MCF 10A (cell line): ENCODE measurements at regions of chr5 and their contacts with region 1.

Region 1: DNA sequence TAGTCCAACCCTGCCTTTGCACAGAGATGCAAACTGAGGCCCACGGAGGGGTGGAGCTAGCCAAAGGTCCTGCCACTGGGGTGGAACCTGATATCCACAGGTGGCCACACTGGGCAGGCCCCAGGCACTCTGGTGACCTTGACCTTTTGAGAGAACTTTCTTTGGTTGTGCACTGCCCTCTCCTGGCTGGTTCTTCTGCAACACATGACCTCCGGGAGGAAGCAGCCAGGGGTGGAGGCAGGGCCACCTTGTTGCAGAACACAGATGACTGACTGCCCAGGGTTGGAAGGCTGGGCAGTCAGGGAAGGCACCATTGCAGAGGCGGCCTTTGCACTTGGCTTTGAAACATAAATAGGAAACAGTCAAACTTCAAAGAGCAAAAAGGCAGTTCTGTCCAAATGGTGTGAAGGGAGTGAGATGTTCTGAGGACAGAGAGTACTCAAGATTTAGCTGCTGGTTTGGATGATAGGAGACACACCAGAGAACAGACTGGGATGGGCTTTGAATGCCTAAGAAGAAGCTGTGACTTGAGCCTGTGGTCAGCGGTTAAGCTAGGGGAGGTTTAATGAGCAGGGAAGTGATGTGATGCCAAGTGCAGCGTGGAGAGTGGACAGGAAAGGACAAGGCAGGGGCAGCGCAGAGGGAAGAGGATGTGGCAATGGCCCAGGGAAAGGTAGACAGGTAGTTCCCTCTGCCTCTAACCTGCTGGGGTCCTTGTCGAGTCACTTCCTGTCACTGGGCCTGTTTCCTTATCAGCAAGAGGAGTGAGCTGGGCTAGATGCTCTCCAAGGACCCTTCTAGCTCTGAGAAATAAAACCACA is 6.8 kb upstream of the TCOF1 start:
- DNase-seq: peak; percentile 91
- H3K4me3 Mint-ChIP-seq: no peak overlapping the region
- H3K27ac Mint-ChIP-seq: no peak overlapping the region
- H3K4me1 Mint-ChIP-seq: peaks cover 6% of the 10 kb centered on the region
- H3K27me3 Mint-ChIP-seq: no peaks in the 10 kb centered on the region
- CTCF ChIP-seq: peak; percentile 94

Region 2: GRCh38 chr5:149298842-149299404 is 1051.8 kb before region 1 on chr5:
- CTCF ChIA-PET with region 1: no interaction called
- POLR2A ChIA-PET with region 1: no interaction called
- intact Hi-C with region 1: no loop called
- DNase-seq: no peak
- H3K4me3 Mint-ChIP-seq: no peak overlapping the region
- H3K27ac Mint-ChIP-seq: no peak overlapping the region
- H3K4me1 Mint-ChIP-seq: peaks cover 9% of the 10 kb centered on the region
- H3K27me3 Mint-ChIP-seq: no peaks in the 10 kb centered on the region
- CTCF ChIP-seq: no peak

Region 3: DNA sequence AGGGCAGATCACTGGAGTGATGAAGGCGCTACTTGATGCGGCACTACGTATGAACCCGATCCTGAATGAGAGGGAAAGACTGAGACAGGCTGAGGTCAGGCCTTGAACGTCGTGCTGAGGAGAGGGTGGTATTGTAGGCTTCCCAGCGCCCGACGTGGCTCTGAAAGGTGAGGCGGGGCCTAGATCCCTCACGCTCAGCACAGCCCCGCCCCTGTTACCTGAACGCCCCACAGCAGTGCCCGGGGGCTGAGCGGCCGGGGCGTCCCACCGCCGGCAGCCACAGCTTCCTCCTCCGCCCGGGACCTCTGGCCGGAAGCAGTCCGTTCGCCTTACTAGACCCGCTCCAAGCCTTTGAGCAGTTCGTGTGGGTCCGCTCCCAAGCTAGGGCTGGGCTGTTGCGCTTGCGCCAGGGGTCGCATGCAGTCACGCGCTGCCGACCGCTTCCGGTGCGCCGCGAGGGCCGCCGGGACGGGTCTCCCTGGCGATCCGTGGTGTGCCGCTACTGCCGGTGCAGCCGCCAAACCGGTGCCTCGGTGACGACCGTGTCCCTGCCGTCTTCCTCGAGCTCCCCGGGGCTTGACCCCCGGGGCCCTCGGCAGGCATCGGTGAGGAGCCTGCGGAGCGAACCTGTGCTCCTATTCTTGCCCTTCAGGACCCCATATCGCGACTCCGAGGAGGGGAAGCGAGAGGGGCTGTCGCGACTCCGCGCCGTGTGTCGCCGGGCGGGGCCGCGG is 350.3 kb before region 1 on chr5 and contains the starts of genes HMGXB3 and TIGD6:
- CTCF ChIA-PET with region 1: no interaction called
- POLR2A ChIA-PET with region 1: no interaction called
- intact Hi-C with region 1: loop called (anchors 2 kb)
- DNase-seq: peak; percentile 92
- H3K4me3 Mint-ChIP-seq: peak within 1 kb of the TSS; percentile 82
- H3K27ac Mint-ChIP-seq: peak within 1 kb of the TSS; percentile 95
- H3K4me1 Mint-ChIP-seq: peaks cover 43% of the 10 kb centered on the region
- H3K27me3 Mint-ChIP-seq: no peaks in the 10 kb centered on the region
- CTCF ChIP-seq: no peak
- total RNA-seq, gene HMGXB3: 66.8 and 67.8 TPM in 2 replicates
- total RNA-seq, gene TIGD6: 9.0 and 10.6 TPM in 2 replicates

Region 4: GRCh38 chr5:150175076-150175935 is 175.4 kb before region 1 on chr5:
- CTCF ChIA-PET with region 1: interaction called, 13 read pairs
- POLR2A ChIA-PET with region 1: interaction called, 5 read pairs
- intact Hi-C with region 1: no loop called
- DNase-seq: peak; percentile 65
- H3K4me3 Mint-ChIP-seq: no peak overlapping the region
- H3K27ac Mint-ChIP-seq: no peak overlapping the region
- H3K4me1 Mint-ChIP-seq: peaks cover 2% of the 10 kb centered on the region
- H3K27me3 Mint-ChIP-seq: peaks cover 7% of the 10 kb centered on the region
- CTCF ChIP-seq: peak; percentile 45

Region 5: GRCh38 chr5:150246835-150247234 is 103.9 kb before region 1 on chr5:
- CTCF ChIA-PET with region 1: interaction called, 16 read pairs
- POLR2A ChIA-PET with region 1: no interaction called
- intact Hi-C with region 1: no loop called
- DNase-seq: peak; percentile 34
- H3K4me3 Mint-ChIP-seq: no peak overlapping the region
- H3K27ac Mint-ChIP-seq: no peak overlapping the region
- H3K4me1 Mint-ChIP-seq: peaks cover 7% of the 10 kb centered on the region
- H3K27me3 Mint-ChIP-seq: no peaks in the 10 kb centered on the region
- CTCF ChIP-seq: no peak

Region 6: DNA sequence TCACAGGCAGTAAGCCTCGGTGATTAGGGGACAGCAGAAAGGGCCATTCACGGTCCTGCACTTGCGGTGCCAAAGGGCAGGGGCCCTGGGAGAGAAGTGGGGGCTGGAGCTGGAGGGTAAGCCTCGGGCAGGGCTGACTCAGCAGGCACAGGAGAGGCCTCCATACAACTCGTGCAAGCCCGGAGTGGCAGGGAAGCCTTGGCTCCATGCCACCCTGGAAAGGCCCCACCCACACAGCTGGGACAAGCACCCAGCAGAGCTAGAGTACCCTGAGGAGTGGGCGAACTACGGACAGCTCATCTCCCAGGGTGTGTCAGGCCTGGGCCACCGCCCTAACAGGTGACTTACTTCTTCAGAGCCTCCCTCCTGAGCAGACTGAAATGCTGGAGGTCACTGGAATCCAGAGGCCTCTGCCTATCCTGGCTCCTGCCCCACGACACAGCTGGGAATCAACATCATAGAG is 55.5 kb before region 1 on chr5:
- CTCF ChIA-PET with region 1: interaction called, 63 read pairs
- POLR2A ChIA-PET with region 1: interaction called, 8 read pairs
- intact Hi-C with region 1: loop called (anchors 2 kb)
- DNase-seq: peak; percentile 88
- H3K4me3 Mint-ChIP-seq: no peak overlapping the region
- H3K27ac Mint-ChIP-seq: peak overlapping the region; percentile 82
- H3K4me1 Mint-ChIP-seq: peaks cover 36% of the 10 kb centered on the region
- H3K27me3 Mint-ChIP-seq: no peaks in the 10 kb centered on the region
- CTCF ChIP-seq: no peak

Region 7: GRCh38 chr5:150320048-150320555 is 30.6 kb before region 1 on chr5:
- CTCF ChIA-PET with region 1: interaction called, 52 read pairs
- POLR2A ChIA-PET with region 1: interaction called, 12 read pairs
- intact Hi-C with region 1: loop called (anchors 1 kb)
- DNase-seq: peak; percentile 98
- H3K4me3 Mint-ChIP-seq: no peak overlapping the region
- H3K27ac Mint-ChIP-seq: peak overlapping the region; percentile 80
- H3K4me1 Mint-ChIP-seq: peaks cover 49% of the 10 kb centered on the region
- H3K27me3 Mint-ChIP-seq: no peaks in the 10 kb centered on the region
- CTCF ChIP-seq: no peak

Region 8: DNA sequence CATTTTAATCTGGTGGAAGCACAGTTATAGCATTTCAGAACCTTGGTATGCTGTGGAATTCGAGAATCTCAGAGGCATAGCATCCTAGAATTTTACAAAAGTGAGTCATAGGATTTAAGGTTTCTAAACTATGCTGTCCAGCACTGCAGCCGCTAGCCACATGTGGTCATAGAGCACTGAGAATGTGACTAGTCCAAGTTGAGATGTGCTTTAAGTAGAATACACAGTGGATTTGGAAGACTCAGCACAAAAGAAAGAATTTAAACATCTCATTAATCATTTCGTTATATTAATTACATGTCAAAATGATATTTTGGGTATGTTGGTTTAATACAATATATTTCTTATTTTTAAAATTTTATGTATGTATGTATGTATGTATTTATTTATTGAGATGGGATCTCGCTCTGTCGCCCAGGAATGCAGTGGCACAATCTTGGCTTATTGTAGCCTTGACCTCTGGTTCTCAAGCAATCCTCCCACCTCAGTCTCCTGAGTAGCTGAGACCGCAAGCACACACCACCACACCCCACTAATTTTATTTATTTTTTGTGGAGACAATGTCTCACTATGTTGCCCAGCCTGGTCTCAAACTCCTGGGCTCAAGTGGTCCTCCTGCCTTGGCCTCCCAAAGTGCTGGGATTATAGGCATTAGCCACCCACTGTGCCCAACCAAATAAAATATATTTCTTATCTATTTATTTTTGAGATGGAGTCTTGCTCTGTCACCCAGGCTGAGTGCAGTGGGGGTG is 119.2 kb after region 1 on chr5:
- CTCF ChIA-PET with region 1: no interaction called
- POLR2A ChIA-PET with region 1: no interaction called
- intact Hi-C with region 1: no loop called
- DNase-seq: peak; percentile 81
- H3K4me3 Mint-ChIP-seq: no peak overlapping the region
- H3K27ac Mint-ChIP-seq: no peak overlapping the region
- H3K4me1 Mint-ChIP-seq: peaks cover 24% of the 10 kb centered on the region
- H3K27me3 Mint-ChIP-seq: no peaks in the 10 kb centered on the region
- CTCF ChIP-seq: no peak

Region 9: GRCh38 chr5:150529555-150529954 is 178.8 kb after region 1 on chr5:
- CTCF ChIA-PET with region 1: no interaction called
- POLR2A ChIA-PET with region 1: no interaction called
- intact Hi-C with region 1: no loop called
- DNase-seq: no peak
- H3K4me3 Mint-ChIP-seq: no peak overlapping the region
- H3K27ac Mint-ChIP-seq: peak overlapping the region; percentile 31
- H3K4me1 Mint-ChIP-seq: peaks cover 27% of the 10 kb centered on the region
- H3K27me3 Mint-ChIP-seq: no peaks in the 10 kb centered on the region
- CTCF ChIP-seq: no peak